Calu3 (cell line): ENCODE measurements at regions of chr3 and their contacts with region 1.

Region 1: GRCh38 chr3:24512564-24513197 is 18.0 kb upstream of the THRB start:
- DNase-seq: no peak
- H3K4me3 Mint-ChIP-seq: no peak overlapping the region
- H3K27ac Mint-ChIP-seq: no peak overlapping the region
- H3K4me1 Mint-ChIP-seq: peaks cover 39% of the 10 kb centered on the region
- H3K27me3 Mint-ChIP-seq: no peaks in the 10 kb centered on the region
- CTCF ChIP-seq: no peak

Region 2: GRCh38 chr3:24005669-24006068 is 507.0 kb before region 1 on chr3:
- CTCF ChIA-PET with region 1: no interaction called
- intact Hi-C with region 1: no loop called
- DNase-seq: no peak
- H3K4me3 Mint-ChIP-seq: no peak overlapping the region
- H3K27ac Mint-ChIP-seq: no peak overlapping the region
- H3K4me1 Mint-ChIP-seq: no peaks in the 10 kb centered on the region
- H3K27me3 Mint-ChIP-seq: no peaks in the 10 kb centered on the region
- CTCF ChIP-seq: no peak

Region 3: GRCh38 chr3:24545913-24546312 is 33.2 kb after region 1 on chr3:
- CTCF ChIA-PET with region 1: interaction called, 10 read pairs
- intact Hi-C with region 1: no loop called
- DNase-seq: no peak
- H3K4me3 Mint-ChIP-seq: no peak overlapping the region
- H3K27ac Mint-ChIP-seq: no peak overlapping the region
- H3K4me1 Mint-ChIP-seq: peaks cover 17% of the 10 kb centered on the region
- H3K27me3 Mint-ChIP-seq: no peaks in the 10 kb centered on the region
- CTCF ChIP-seq: no peak